Sciatic nerve (tissue), 2 donors: ENCODE measurements at regions of chr10 and their contacts with region 1.

Region 1: GRCh38 chr10:5659702-5660528 is 6.5 kb downstream of the ASB13 start:
- DNase-seq: no peak
- ATAC-seq: peak; percentile 49

Region 2: GRCh38 chr10:3858041-3858845 is 1801.7 kb before region 1 on chr10:
- intact Hi-C with region 1: loop called (anchors 5 kb)
- DNase-seq: no peak
- ATAC-seq: no peak